ENCODE measurements at regions of chr1 and their contacts with region 1.

Region 1: DNA sequence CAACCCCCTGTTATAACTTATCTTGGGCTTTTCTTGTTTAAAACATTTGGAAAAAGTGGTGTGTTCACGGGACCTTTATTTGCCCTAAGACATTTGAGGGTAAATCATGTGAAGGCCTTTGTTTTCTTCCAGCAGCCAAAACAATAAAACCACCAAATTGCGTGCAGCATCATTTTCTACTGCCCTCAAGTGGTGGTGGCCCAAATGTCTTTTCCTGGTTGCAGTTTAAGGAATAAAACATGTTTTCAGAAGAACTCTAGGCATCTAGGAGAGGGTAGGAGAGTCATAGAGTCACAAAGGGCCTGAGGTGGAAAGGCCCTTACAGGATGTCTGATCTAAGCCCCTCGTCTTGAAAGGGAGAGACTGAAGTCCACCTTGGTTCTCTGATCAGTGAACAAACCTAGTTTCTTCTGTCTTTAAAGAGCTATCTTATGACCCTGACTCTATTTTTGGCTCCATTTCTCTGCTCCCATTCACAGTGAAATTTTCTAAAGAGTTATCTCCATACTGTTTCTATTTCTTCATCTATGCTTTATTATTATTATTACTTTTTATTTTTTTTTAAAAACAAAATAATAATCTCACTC is 16.0 kb upstream of the EPS15 start:
- DNase-seq: peak; percentile 54
- ATAC-seq: peak; percentile 72
- H3K4me3 ChIP-seq: no peak overlapping the region
- H3K27ac ChIP-seq: peak overlapping the region; percentile 27; the same call in 1 of the 2 replicates
- H3K4me1 ChIP-seq: peaks cover 11% of the 10 kb centered on the region
- H3K27me3 ChIP-seq: no peaks in the 10 kb centered on the region
- CTCF ChIP-seq: peak; percentile 70 to 85 (median 81)
- EP300 ChIP-seq: no peak
- POLR2A ChIP-seq: no peak
- RAD21 ChIP-seq: peak; percentile 93

Region 2: DNA sequence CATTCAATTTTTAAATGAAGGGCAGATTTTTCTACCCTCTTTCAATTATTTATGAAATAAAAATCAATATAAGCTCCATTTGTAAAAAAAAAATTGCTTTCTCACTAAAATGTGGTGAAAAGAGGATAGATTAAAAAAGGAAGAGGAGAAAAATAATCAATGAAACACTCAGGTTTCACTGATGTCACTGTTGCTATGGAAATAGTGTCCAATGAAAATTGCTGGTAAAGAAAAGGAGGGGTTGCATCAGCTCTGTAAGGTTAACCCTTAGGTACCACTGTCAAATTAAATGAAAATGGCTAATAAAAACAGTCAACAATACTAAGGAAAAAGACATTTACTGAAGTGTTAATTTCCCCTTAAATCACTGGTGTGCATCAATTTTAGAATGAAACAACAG is 113.1 kb before region 1 on chr1:
- CTCF ChIA-PET with region 1: interaction called, 18 read pairs
- POLR2A ChIA-PET with region 1: no interaction called
- RAD21 ChIA-PET with region 1: interaction called, 6 read pairs
- SMC1A ChIA-PET with region 1: interaction called, 3 read pairs
- in situ Hi-C with region 1: no loop called
- intact Hi-C with region 1: no loop called
- DNase-seq: no peak
- ATAC-seq: peak; percentile 88
- H3K4me3 ChIP-seq: no peak overlapping the region
- H3K27ac ChIP-seq: no peak overlapping the region
- H3K4me1 ChIP-seq: no peaks in the 10 kb centered on the region
- H3K27me3 ChIP-seq: no peaks in the 10 kb centered on the region
- CTCF ChIP-seq: no peak
- EP300 ChIP-seq: no peak
- POLR2A ChIP-seq: no peak
- RAD21 ChIP-seq: no peak

Region 3: GRCh38 chr1:51472359-51472758 is 62.7 kb before region 1 on chr1:
- CTCF ChIA-PET with region 1: interaction called, 14 read pairs
- POLR2A ChIA-PET with region 1: no interaction called
- RAD21 ChIA-PET with region 1: no interaction called
- SMC1A ChIA-PET with region 1: interaction called, 12 read pairs
- in situ Hi-C with region 1: no loop called
- intact Hi-C with region 1: no loop called
- DNase-seq: no peak
- ATAC-seq: no peak
- H3K4me3 ChIP-seq: no peak overlapping the region
- H3K27ac ChIP-seq: no peak overlapping the region
- H3K4me1 ChIP-seq: no peaks in the 10 kb centered on the region
- H3K27me3 ChIP-seq: no peaks in the 10 kb centered on the region
- CTCF ChIP-seq: no peak
- EP300 ChIP-seq: no peak
- POLR2A ChIP-seq: no peak
- RAD21 ChIP-seq: no peak

Region 4: GRCh38 chr1:51519048-51519864 is 15.8 kb before region 1 on chr1 and contains the start of gene EPS15:
- CTCF ChIA-PET with region 1: interaction called, 19 read pairs
- POLR2A ChIA-PET with region 1: no interaction called
- RAD21 ChIA-PET with region 1: interaction called, 14 read pairs
- SMC1A ChIA-PET with region 1: interaction called, 34 read pairs
- in situ Hi-C with region 1: no loop called
- intact Hi-C with region 1: no loop called
- DNase-seq: no peak
- ATAC-seq: peak; percentile 73
- H3K4me3 ChIP-seq: peak within 1 kb of the TSS; percentile 95
- H3K27ac ChIP-seq: peak within 1 kb of the TSS; percentile 83
- H3K4me1 ChIP-seq: peaks cover 11% of the 10 kb centered on the region
- H3K27me3 ChIP-seq: no peaks in the 10 kb centered on the region
- CTCF ChIP-seq: no peak
- EP300 ChIP-seq: no peak
- POLR2A ChIP-seq: peak; percentile 86
- RAD21 ChIP-seq: peak; percentile 33; the same call in 1 of the 2 replicates
- polyA plus RNA-seq, gene EPS15: 24.7 to 49.5 TPM

Region 5: GRCh38 chr1:51569284-51570062 is 34.4 kb after region 1 on chr1:
- CTCF ChIA-PET with region 1: interaction called, 5 read pairs
- POLR2A ChIA-PET with region 1: interaction called, 3 read pairs
- RAD21 ChIA-PET with region 1: interaction called, 6 read pairs
- SMC1A ChIA-PET with region 1: no interaction called
- in situ Hi-C with region 1: no loop called
- intact Hi-C with region 1: loop called (anchors 2 kb)
- DNase-seq: peak; percentile 84
- ATAC-seq: peak; percentile 88
- H3K4me3 ChIP-seq: peak overlapping the region; percentile 17; the same call in 1 of the 2 replicates
- H3K27ac ChIP-seq: peak overlapping the region; percentile 74
- H3K4me1 ChIP-seq: peaks cover 34% of the 10 kb centered on the region
- H3K27me3 ChIP-seq: no peaks in the 10 kb centered on the region
- CTCF ChIP-seq: peak in 2 of 3 experiments; percentile 23 to 26; a peak in 3 of 6 replicates
- EP300 ChIP-seq: no peak
- POLR2A ChIP-seq: peak; percentile 36; the same call in 1 of the 2 replicates
- RAD21 ChIP-seq: peak; percentile 40

Measured in GM12878 (cell line).